ENCODE measurements at regions of chrX and their contacts with region 1.

Region 1: GRCh38 chrX:45862801-45863200 is 662.1 kb upstream of the DIPK2B start:
- DNase-seq: no peak
- H3K4me3 ChIP-seq: no peak overlapping the region
- H3K27ac ChIP-seq: no peak overlapping the region
- H3K4me1 ChIP-seq: peaks cover 0 to 2% (median 0%) of the 10 kb centered on the region in 4 experiments; a peak in 1 of 7 replicates
- H3K27me3 ChIP-seq: no peaks in the 10 kb centered on the region
- CTCF ChIP-seq: no peak
- EP300 ChIP-seq: no peak
- POLR2A ChIP-seq: no peak
- RAD21 ChIP-seq: no peak

Region 2: GRCh38 chrX:45851434-45851991 is 11.3 kb before region 1 on chrX:
- CTCF ChIA-PET with region 1: no interaction called
- POLR2A ChIA-PET with region 1: interaction called, 10 read pairs
- DNase-seq: peak; percentile 57 to 65
- H3K4me3 ChIP-seq: peak overlapping the region; percentile 85 to 99 (median 96)
- H3K27ac ChIP-seq: peak overlapping the region; percentile 83; the same call in 1 of the 2 replicates
- H3K4me1 ChIP-seq: peaks cover 0 to 12% (median 1%) of the 10 kb centered on the region in 4 experiments; a peak in 4 of 7 replicates
- H3K27me3 ChIP-seq: no peaks in the 10 kb centered on the region
- CTCF ChIP-seq: no peak
- EP300 ChIP-seq: 0 out of 3 replicates have a peak, but pooled peaks of 1 of the 2 experiments have one; percentile 12
- POLR2A ChIP-seq: peak; percentile 37; a peak in 2 of 3 replicates
- RAD21 ChIP-seq: no peak

Region 3: GRCh38 chrX:46044486-46044885 is 181.7 kb after region 1 on chrX:
- CTCF ChIA-PET with region 1: no interaction called
- POLR2A ChIA-PET with region 1: no interaction called
- DNase-seq: no peak
- H3K4me3 ChIP-seq: no peak overlapping the region
- H3K27ac ChIP-seq: no peak overlapping the region
- H3K4me1 ChIP-seq: no peaks in the 10 kb centered on the region
- H3K27me3 ChIP-seq: no peaks in the 10 kb centered on the region
- CTCF ChIP-seq: no peak
- EP300 ChIP-seq: no peak
- POLR2A ChIP-seq: no peak
- RAD21 ChIP-seq: no peak